AG04450 (cell line): ENCODE measurements at regions of chr4 and their contacts with region 1.

Region 1: DNA sequence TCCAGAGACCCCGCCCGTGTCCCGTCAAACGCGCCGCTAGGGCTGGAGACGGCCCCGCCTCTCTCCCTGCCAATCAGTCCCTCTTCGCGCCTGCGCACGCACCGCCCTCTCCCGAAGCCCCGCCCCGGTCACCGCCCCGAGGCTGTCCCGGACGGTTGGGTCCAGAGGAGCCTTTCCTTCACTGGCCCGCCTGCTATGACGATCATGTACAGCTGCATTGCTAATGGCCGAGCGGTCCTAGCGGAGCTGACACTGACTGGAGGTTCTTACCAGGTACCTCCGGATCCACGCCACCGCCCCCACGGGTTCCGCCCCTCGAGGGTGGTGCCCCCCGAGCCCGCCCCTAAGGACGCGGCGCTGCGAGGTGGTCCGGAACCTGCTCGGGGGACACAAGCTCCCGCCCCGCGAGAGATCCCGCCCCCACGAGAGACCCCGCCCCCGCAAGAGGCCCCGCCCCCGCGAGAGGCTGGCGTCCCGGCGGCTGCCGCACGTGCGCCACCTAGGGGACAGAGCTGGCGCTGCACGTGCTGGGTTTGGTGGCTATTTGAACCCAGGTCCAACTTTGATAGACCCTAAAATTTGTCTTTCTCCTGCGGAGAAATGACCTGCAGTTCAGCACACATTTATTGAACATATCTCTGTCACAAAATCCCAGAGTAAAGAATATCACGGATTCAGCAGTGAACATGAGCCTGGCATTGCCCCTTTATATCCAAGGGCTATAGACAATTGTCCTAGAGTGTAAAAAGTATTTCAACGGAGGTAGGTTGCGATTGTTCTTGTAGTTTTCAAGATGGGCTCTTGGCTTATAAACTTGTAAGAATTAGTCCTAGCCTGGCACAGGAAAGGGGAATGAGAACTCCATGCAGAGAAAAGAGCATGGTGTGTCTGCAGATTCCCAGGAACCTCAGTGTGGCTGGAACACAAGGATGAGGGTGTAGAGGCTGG is 88.7 kb downstream of the HNRNPD start:
- DNase-seq: peak; percentile 94
- H3K4me3 ChIP-seq: peak overlapping the region; percentile 57
- H3K27ac ChIP-seq: peak overlapping the region; percentile 11
- H3K27me3 ChIP-seq: peaks cover 2% of the 10 kb centered on the region
- CTCF ChIP-seq: peak; percentile 81

Region 2: GRCh38 chr4:82171531-82172155 is 113.5 kb before region 1 on chr4:
- CTCF ChIA-PET with region 1: no interaction called
- POLR2A ChIA-PET with region 1: no interaction called
- DNase-seq: no peak
- H3K4me3 ChIP-seq: no peak overlapping the region
- H3K27ac ChIP-seq: no peak overlapping the region
- H3K27me3 ChIP-seq: no peaks in the 10 kb centered on the region
- CTCF ChIP-seq: no peak

Region 3: GRCh38 chr4:82268050-82268825 is 16.9 kb before region 1 on chr4:
- CTCF ChIA-PET with region 1: interaction called, 23 read pairs
- POLR2A ChIA-PET with region 1: interaction called, 6 read pairs
- DNase-seq: peak; percentile 13
- H3K4me3 ChIP-seq: no peak overlapping the region
- H3K27ac ChIP-seq: no peak overlapping the region
- H3K27me3 ChIP-seq: no peaks in the 10 kb centered on the region
- CTCF ChIP-seq: peak; percentile 84

Region 4: GRCh38 chr4:82352913-82353366 is 67.8 kb after region 1 on chr4:
- CTCF ChIA-PET with region 1: interaction called, 17 read pairs
- POLR2A ChIA-PET with region 1: no interaction called
- DNase-seq: no peak
- H3K4me3 ChIP-seq: no peak overlapping the region
- H3K27ac ChIP-seq: no peak overlapping the region
- H3K27me3 ChIP-seq: no peaks in the 10 kb centered on the region
- CTCF ChIP-seq: no peak

Region 5: GRCh38 chr4:82373816-82374625 is 88.9 kb after region 1 on chr4 and contains the start of gene HNRNPD:
- CTCF ChIA-PET with region 1: no interaction called
- POLR2A ChIA-PET with region 1: interaction called, 10 read pairs
- DNase-seq: peak; percentile 99
- H3K4me3 ChIP-seq: peak within 1 kb of the TSS; percentile 98
- H3K27ac ChIP-seq: peak within 1 kb of the TSS; percentile 97
- H3K27me3 ChIP-seq: no peaks in the 10 kb centered on the region
- CTCF ChIP-seq: no peak
- polyA plus RNA-seq, gene HNRNPD: 73.4 and 93.8 TPM in 2 replicates